ENCODE measurements at regions of chr2 and their contacts with region 1.

Region 1: GRCh38 chr2:157395811-157396210 is 48.1 kb downstream of the CYTIP start:
- DNase-seq: no peak
- H3K4me3 Mint-ChIP-seq: no peak overlapping the region
- H3K27ac Mint-ChIP-seq: no peak overlapping the region
- H3K4me1 Mint-ChIP-seq: peaks cover 9% of the 10 kb centered on the region
- H3K27me3 Mint-ChIP-seq: no peaks in the 10 kb centered on the region

Region 2: DNA sequence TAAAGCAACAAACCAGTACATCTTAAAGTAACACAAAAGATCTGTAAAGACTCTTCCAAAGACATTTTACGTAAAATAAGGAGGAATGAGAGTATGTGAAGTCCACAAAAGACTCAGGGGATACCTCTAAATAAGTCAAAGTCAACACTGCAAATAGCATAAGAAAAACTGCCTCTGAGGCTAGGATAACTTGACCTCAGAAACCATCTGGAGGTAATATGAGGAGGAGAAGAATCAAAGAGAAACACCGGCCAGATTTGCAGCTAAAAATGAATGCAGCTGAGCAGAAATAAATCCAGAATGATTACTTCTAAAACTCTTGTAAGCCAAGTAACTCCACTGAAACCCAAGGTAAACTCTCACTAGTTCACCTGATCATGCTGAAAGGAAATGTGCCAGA is 17.9 kb before region 1 on chr2:
- CTCF ChIA-PET with region 1: interaction called, 3 read pairs
- intact Hi-C with region 1: loop called (anchors 2 kb)
- DNase-seq: no peak
- H3K4me3 Mint-ChIP-seq: no peak overlapping the region
- H3K27ac Mint-ChIP-seq: no peak overlapping the region
- H3K4me1 Mint-ChIP-seq: peaks cover 35% of the 10 kb centered on the region
- H3K27me3 Mint-ChIP-seq: no peaks in the 10 kb centered on the region